ENCODE measurements at regions of chr11 and their contacts with region 1.

Region 1: GRCh38 chr11:128772814-128773213 is 78.9 kb downstream of the FLI1 start:
- DNase-seq: no peak
- H3K4me3 ChIP-seq: no peak overlapping the region
- H3K27ac ChIP-seq: no peak overlapping the region
- H3K4me1 ChIP-seq: no peaks in the 10 kb centered on the region
- H3K27me3 ChIP-seq: peaks cover 15% of the 10 kb centered on the region; the same call in 1 of the 2 replicates
- CTCF ChIP-seq: no peak

Region 2: GRCh38 chr11:127890030-127890611 is 882.7 kb before region 1 on chr11:
- CTCF ChIA-PET with region 1: no interaction called
- POLR2A ChIA-PET with region 1: interaction called, 21 read pairs
- intact Hi-C with region 1: no loop called
- DNase-seq: peak in 1 of 2 experiments; percentile 46
- H3K4me3 ChIP-seq: no peak overlapping the region
- H3K27ac ChIP-seq: no peak overlapping the region
- H3K4me1 ChIP-seq: no peaks in the 10 kb centered on the region
- H3K27me3 ChIP-seq: no peaks in the 10 kb centered on the region
- CTCF ChIP-seq: no peak